Activated T-helper 1 cell treated with anti-CD3 and anti-CD28 coated beads, Interleukin-12 subunit alpha, Interleukin-12 subunit beta, Interleukin-2, Interleukin-4 antibody, amounts not matched to agents 30 ng/mL and 10 ng/mL and 1 ng/mL, durations not matched to agents 14 hours and 24 hours and 36 hours (primary cell): ENCODE measurements at regions of chr16 and their contacts with region 1.

Region 1: GRCh38 chr16:89115216-89115861 is 21.7 kb downstream of the ACSF3 start:
- DNase-seq: peak; percentile 83
- H3K4me3 Mint-ChIP-seq: peak overlapping the region; percentile 79
- H3K27ac Mint-ChIP-seq: peak overlapping the region; percentile 90
- H3K4me1 Mint-ChIP-seq: peaks cover 29% of the 10 kb centered on the region
- H3K27me3 Mint-ChIP-seq: no peaks in the 10 kb centered on the region

Region 2: DNA sequence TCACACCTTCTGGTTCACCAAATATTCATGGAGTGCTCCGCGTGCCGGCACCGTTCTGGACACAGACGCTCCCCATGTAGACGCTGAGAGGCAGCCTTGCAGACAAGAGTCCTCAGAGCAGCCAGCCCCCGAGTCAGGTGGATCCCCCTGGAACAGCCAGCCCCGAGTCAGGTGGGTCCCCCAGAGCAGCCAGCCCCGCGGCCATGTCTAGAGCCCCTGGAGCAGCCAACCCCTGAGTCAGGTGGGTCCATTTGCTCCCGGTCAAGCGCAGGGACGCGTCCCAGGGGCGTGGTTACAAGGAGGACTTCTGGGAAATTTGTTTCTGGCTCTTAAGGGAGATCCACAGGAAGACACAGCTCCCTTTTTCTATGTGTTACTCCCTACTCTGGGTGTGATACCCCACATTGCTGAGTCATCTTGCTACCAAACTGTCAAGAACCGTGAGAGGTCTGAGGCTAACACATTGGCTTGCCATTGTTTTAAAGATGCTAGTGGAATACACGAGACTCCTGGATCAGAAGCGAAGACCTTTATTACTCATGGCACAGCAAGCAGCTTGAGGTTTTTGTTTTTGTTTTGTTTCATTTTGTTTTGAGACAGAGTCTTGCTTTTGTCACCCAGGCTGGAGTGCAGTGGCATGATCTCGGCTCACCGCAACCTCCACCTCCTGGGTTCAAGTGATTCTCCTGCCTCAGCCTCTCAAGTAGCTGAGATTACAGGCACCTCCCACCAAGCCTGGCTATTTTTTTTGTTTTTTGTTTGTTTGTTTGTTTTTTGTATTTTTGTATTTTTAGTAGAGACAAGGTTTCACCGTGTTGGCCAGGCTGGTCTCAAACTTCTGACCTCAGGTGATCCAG is 95.0 kb before region 1 on chr16:
- intact Hi-C with region 1: loop called (anchors 1 kb)
- DNase-seq: peak; percentile 63
- H3K4me3 Mint-ChIP-seq: no peak overlapping the region
- H3K27ac Mint-ChIP-seq: peak overlapping the region; percentile 55
- H3K4me1 Mint-ChIP-seq: peaks cover 25% of the 10 kb centered on the region
- H3K27me3 Mint-ChIP-seq: no peaks in the 10 kb centered on the region

Region 3: DNA sequence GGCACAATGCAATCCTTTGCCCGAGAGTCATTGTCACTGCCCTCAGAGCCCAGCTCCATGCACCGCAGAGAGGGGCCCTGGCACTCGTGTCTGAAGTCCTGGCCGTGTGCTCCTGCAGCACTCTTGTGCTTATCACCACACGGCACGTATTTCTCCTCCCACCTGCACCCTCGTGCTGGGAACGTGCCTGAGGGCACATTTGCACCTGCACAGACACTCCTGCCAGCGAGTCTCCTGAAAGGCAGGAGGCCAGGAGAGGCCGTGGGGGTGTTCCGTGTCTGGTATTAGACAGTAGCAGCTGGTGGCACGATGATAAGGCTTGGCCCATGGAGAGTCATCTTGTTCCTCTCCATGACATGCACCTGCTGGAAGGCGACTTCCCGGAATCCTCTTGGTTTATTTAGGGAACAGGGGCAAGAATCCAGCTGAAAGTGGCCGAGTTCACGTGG is 25.1 kb before region 1 on chr16:
- intact Hi-C with region 1: no loop called
- DNase-seq: no peak
- H3K4me3 Mint-ChIP-seq: no peak overlapping the region
- H3K27ac Mint-ChIP-seq: no peak overlapping the region
- H3K4me1 Mint-ChIP-seq: peaks cover 12% of the 10 kb centered on the region
- H3K27me3 Mint-ChIP-seq: peaks cover 6% of the 10 kb centered on the region

Region 4: DNA sequence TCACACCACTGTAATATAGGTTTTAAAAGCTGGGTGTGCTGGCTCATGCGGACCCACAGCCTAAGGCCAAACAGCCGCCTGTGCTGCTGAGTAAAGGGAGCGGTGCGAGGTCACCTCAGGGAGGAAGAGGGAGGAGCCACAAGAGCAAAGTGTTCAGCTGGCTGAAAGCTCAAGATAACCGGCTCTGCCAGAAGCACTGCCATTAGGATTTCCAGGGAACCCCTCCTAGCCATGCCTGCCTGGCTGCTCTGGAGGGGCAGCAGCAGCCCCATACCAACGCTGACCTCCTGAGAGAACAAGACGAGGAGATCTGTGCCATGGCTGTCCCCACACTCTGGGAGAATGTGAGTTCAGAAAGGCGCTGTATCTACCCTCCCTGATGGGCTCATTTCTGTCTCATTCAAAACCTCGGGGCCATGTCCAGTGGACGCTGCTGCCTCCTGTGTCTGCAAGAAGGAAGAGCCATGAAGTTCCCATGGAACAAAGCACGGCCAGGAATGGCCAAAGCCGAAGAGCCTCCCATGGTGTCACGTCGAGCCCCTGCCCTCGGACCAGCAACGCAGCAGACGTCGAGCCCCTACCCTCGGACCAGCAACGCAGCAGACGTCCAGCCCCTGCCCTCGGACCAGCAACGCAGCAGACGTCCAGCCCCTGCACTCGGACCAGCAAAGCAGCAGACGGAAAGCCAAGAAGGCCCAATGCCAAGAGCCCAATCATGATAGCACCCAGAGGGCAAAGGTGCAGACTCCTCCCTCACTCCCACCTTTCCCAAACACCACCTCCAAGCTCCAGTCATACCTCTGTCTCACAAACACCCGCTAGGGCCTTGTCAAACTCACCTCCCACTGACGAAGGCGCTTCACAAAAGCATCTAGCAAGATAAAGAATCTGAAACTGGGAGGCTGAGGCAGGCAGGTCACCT is 268.0 kb after region 1 on chr16:
- intact Hi-C with region 1: no loop called
- DNase-seq: no peak
- H3K4me3 Mint-ChIP-seq: peak overlapping the region; percentile 41
- H3K27ac Mint-ChIP-seq: peak overlapping the region; percentile 80
- H3K4me1 Mint-ChIP-seq: peaks cover 63% of the 10 kb centered on the region
- H3K27me3 Mint-ChIP-seq: no peaks in the 10 kb centered on the region